Breast epithelium (tissue), 4 donors: ENCODE measurements at regions of chr18 and their contacts with region 1.

Region 1: GRCh38 chr18:37393945-37394609 is 171.5 kb downstream of the CELF4 start:
- DNase-seq: peak in 1 of 2 donors; percentile 55
- H3K4me3 ChIP-seq: peak overlapping the region; percentile 40 to 74 (median 51)
- H3K27ac ChIP-seq: peak overlapping the region; percentile 48 to 80
- H3K4me1 ChIP-seq: no peaks in the 10 kb centered on the region
- H3K27me3 ChIP-seq: peaks cover 0 to 4% of the 10 kb centered on the region in 2 donors
- CTCF ChIP-seq: no peak
- POLR2A ChIP-seq: no peak

Region 2: DNA sequence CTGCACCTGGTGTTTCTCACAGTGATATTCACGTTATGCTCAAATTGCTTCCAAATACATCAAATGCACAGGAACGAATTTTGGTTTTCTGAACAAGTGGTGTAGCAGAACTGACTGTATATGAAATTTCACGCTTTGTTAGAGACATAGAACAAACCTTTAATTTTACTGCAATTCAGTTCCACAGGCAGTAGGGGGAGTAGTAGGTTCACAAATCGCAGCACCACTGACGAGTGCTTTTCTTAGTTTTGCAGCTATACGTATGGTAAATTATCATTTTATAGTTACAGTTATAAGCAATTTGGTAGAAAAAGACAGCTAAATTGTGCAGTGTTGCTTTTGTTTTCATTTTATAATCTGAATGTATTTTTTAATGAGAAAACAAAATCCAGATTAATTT is 451.8 kb before region 1 on chr18:
- intact Hi-C with region 1: loop called (anchors 5 kb)
- DNase-seq: no peak
- H3K4me3 ChIP-seq: no peak overlapping the region
- H3K27ac ChIP-seq: no peak overlapping the region
- H3K4me1 ChIP-seq: no peaks in the 10 kb centered on the region
- H3K27me3 ChIP-seq: no peaks in the 10 kb centered on the region
- CTCF ChIP-seq: no peak
- POLR2A ChIP-seq: no peak